CD4-positive, alpha-beta T cell (primary cell): ENCODE measurements at regions of chr11 and their contacts with region 1.

Region 1: DNA sequence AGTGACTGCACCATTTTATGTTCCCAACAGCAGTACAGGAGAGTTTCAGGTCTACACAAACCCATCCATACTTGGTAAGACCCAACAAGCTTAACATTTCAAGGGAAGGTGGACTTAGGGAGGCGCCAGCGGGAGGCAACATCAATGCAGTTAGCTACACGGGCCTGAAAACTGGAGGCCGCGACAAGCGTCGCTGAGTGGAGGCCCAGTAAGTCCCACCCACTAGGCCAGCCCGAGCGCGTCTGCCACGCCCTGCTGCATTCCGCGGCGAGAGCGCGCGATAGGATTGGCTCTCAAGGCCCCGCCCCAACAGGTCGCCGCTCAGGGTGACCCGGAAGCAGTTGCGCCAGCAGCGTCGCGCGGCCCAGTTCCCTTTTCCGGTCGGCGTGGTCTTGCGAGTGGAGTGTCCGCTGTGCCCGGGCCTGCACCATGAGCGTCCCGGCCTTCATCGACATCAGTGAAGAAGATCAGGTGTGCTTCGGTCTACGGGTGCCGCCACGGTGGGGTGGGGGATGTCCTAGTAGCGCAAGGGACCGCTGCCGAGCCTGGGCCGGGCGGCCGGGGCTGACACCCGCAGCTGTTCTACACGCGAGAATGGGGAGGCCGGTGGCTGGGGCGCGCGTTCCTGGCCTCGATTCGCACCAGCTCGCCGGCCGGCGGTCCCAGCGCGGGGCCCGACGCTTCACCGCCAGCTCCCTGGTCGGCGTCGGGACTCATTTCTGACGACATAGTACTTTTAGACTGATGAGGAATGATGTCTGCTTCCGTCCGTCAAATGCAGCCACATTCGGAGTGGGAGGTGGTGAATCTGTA is at the start of gene EIF3M:
- DNase-seq: peak; percentile 92 to 98 (median 95)
- ATAC-seq: peak; percentile 98
- H3K4me3 ChIP-seq: peak within 1 kb of the TSS; percentile 89
- H3K4me3 Mint-ChIP-seq: peak within 1 kb of the TSS; percentile 94
- H3K27ac ChIP-seq: peak within 1 kb of the TSS; percentile 84 to 87
- H3K27ac Mint-ChIP-seq: peak within 1 kb of the TSS; percentile 94
- H3K4me1 ChIP-seq: peaks cover 38% of the 10 kb centered on the region
- H3K4me1 Mint-ChIP-seq: peaks cover 52% of the 10 kb centered on the region
- H3K27me3 ChIP-seq: no peaks in the 10 kb centered on the region
- H3K27me3 Mint-ChIP-seq: no peaks in the 10 kb centered on the region
- CTCF ChIP-seq: no peak
- total RNA-seq, gene EIF3M: 260 to 264 TPM

Region 2: DNA sequence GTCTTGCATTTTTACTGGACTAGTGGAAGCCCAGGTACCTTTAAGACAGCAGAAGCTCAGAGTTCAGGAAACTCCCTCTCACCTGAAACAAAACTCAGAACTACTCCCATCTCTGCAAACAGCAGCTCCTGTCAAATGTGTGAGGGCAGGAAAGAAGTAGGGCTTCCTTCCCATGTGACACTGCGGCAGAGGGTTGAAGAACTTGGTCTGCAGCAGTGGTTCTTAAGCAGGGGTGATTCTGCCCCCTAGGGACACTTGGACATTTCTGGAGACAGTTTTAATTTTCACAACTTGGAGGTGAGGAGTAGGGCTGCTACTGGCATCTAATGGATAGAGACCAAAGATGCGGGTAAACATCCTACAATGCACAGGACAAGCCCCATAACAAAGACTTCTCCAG is 429.4 kb before region 1 on chr11:
- CTCF ChIA-PET with region 1: no interaction called
- POLR2A ChIA-PET with region 1: no interaction called
- intact Hi-C with region 1: no loop called
- DNase-seq: peak in 2 of 14 experiments; percentile 5 to 29
- ATAC-seq: no peak
- H3K4me3 ChIP-seq: no peak overlapping the region
- H3K4me3 Mint-ChIP-seq: no peak overlapping the region
- H3K27ac ChIP-seq: no peak overlapping the region
- H3K27ac Mint-ChIP-seq: no peak overlapping the region
- H3K4me1 ChIP-seq: no peaks in the 10 kb centered on the region
- H3K4me1 Mint-ChIP-seq: no peaks in the 10 kb centered on the region
- H3K27me3 ChIP-seq: peaks cover 0 to 11% of the 10 kb centered on the region in 2 experiments
- H3K27me3 Mint-ChIP-seq: peaks cover 46% of the 10 kb centered on the region
- CTCF ChIP-seq: no peak

Region 3: DNA sequence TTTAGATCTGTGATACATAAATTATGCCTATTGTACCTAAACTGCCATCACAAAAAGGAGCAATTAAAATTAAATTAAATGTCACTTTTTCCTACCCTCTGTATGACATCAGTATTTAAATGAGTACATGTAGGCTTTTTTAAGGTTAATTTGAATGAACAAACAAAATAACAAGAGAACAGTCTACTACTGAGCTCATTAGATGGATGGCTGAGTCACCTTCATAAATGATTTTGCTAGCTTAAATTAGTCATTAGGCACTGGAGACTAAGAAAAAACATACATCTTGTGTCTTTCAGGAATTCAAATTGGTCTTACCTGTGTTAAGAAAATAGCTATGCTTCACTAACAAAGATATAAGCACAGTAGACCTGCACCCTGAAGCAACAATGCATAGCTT is 339.2 kb before region 1 on chr11:
- CTCF ChIA-PET with region 1: no interaction called
- POLR2A ChIA-PET with region 1: no interaction called
- intact Hi-C with region 1: no loop called
- DNase-seq: no peak
- ATAC-seq: no peak
- H3K4me3 ChIP-seq: no peak overlapping the region
- H3K4me3 Mint-ChIP-seq: no peak overlapping the region
- H3K27ac ChIP-seq: no peak overlapping the region
- H3K27ac Mint-ChIP-seq: no peak overlapping the region
- H3K4me1 ChIP-seq: no peaks in the 10 kb centered on the region
- H3K4me1 Mint-ChIP-seq: no peaks in the 10 kb centered on the region
- H3K27me3 ChIP-seq: no peaks in the 10 kb centered on the region
- H3K27me3 Mint-ChIP-seq: no peaks in the 10 kb centered on the region
- CTCF ChIP-seq: no peak

Region 4: DNA sequence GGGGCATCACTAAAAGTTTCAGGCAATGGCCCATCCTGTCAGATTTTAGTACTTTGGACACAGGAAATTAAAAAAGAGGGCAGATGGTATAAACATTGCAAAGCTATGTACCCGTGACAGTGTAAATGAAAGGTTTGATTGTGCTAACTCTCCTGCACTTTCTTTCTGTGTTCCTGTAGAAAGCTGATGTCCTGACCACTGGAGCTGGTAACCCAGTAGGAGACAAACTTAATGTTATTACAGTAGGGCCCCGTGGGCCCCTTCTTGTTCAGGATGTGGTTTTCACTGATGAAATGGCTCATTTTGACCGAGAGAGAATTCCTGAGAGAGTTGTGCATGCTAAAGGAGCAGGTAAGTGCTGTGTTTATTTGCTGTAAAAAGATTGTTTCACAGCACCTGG is 1865.3 kb after region 1 on chr11:
- CTCF ChIA-PET with region 1: no interaction called
- POLR2A ChIA-PET with region 1: no interaction called
- intact Hi-C with region 1: loop called in 1 of 2 experiments (anchors 10 kb)
- DNase-seq: peak in 1 of 14 experiments; percentile 18
- ATAC-seq: no peak
- H3K4me3 ChIP-seq: no peak overlapping the region
- H3K4me3 Mint-ChIP-seq: no peak overlapping the region
- H3K27ac ChIP-seq: no peak overlapping the region
- H3K27ac Mint-ChIP-seq: no peak overlapping the region
- H3K4me1 ChIP-seq: peaks cover 12% of the 10 kb centered on the region
- H3K4me1 Mint-ChIP-seq: peaks cover 56% of the 10 kb centered on the region
- H3K27me3 ChIP-seq: no peaks in the 10 kb centered on the region
- H3K27me3 Mint-ChIP-seq: no peaks in the 10 kb centered on the region
- CTCF ChIP-seq: no peak